MCF 10A (cell line): ENCODE measurements at regions of chr11 and their contacts with region 1.

Region 1: DNA sequence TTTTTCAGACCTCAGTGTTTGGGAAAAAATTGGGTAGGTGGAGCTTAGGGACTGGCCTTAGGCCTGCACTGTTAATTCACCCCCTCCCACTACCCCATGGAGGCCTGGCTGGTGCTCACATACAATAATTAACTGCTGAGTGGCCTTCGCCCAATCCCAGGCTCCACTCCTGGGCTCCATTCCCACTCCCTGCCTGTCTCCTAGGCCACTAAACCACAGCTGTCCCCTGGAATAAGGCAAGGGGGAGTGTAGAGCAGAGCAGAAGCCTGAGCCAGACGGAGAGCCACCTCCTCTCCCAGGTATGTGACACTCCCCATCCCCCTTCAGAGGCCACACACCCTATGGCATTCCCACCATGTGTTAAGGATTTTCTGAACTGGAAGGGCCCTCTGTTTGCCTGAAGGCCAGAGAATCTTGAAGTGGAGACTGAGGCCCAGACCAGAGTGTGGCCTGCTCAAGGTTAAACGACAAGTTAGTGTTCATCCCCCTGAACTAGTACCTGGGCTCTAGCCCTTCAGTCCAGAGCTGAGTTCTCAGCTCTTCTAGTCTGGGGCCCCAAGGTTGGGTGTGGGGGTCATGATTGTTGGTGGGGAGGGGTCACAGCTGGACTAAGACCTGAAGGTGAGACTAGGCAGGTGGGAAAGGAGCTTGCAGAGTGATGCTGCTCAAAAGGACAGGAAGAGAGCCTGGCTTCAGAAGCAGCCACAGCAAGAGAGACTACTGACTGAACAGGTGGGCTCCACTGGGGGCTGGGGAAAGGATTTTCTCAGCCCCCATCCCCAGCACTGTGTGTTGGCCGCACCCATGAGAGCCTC is 2.3 kb upstream of the FOLR1 start:
- DNase-seq: no peak
- H3K4me3 Mint-ChIP-seq: no peak overlapping the region
- H3K27ac Mint-ChIP-seq: no peak overlapping the region
- H3K4me1 Mint-ChIP-seq: peaks cover 7% of the 10 kb centered on the region
- H3K27me3 Mint-ChIP-seq: no peaks in the 10 kb centered on the region
- CTCF ChIP-seq: no peak

Region 2: DNA sequence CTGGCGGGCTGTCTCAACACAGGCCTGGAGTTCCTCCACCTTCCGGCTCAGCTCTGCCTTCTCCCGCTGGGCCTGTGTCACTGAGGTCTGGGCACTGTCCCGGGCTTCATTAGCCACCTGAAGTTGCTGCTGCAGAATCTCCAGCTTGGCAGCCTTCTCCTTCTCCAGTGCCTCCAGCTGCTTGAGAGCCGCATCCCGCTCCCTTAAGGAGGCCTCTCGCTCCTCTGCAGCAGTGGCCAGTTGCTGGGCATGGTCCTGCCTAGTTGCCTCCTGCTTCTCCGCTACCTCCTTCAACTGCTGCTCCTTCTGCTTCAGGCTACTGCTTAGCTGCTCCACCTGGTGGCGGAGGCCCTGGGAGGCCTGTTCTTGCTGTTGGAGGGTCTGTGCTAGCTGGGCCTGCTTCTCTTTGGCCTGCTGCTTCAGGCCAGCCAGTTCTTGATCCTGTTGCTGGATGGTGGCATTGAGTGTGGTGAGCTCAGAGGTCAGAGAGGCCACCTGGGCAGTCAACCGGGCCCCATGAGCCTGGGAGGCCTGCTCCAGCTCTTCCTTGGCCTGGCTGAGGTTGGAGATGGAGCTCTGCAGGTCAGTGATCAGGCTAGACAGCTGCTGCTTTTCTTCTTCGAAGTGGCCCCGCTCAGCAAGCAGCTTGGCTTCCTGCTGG is 174.0 kb before region 1 on chr11:
- CTCF ChIA-PET with region 1: interaction called, 24 read pairs
- POLR2A ChIA-PET with region 1: interaction called, 3 read pairs
- intact Hi-C with region 1: no loop called
- DNase-seq: no peak
- H3K4me3 Mint-ChIP-seq: no peak overlapping the region
- H3K27ac Mint-ChIP-seq: no peak overlapping the region
- H3K4me1 Mint-ChIP-seq: peaks cover 34% of the 10 kb centered on the region
- H3K27me3 Mint-ChIP-seq: no peaks in the 10 kb centered on the region
- CTCF ChIP-seq: peak; percentile 20

Region 3: DNA sequence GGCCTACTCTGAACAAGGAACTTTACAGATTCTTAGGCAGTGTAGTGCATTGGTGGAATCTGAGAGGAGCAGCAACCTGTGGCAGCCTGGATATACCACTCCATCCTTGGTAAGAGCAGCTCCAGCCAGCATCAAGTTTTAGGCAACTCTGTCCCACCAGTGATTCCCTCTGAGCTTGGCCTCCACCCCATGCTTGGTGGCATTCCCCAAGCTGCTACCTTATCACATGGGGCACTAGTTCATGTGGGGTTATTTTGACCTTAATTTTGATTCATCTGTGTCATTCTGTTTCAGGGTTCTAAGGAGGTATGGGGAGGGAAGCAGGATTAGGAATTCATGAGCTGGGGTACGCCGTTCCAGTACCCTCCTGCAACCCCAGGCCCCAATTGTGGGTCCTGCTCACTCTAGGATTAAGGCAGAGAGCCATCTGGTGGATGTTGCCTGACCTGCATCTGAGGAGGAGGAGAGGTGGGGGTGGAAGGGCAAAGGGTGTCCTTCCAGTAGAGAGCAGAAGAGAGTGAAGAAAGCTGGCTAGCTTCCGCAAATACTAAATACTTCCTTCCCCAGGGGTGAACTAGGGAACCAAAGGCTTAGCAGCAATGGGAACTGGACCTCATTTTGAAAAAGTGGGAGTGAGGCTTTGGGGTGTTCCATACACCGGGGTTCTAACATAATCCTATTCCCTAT is 98.5 kb before region 1 on chr11:
- CTCF ChIA-PET with region 1: interaction called, 58 read pairs
- POLR2A ChIA-PET with region 1: interaction called, 3 read pairs
- intact Hi-C with region 1: no loop called
- DNase-seq: peak; percentile 69
- H3K4me3 Mint-ChIP-seq: no peak overlapping the region
- H3K27ac Mint-ChIP-seq: peak overlapping the region; percentile 70
- H3K4me1 Mint-ChIP-seq: no peaks in the 10 kb centered on the region
- H3K27me3 Mint-ChIP-seq: no peaks in the 10 kb centered on the region
- CTCF ChIP-seq: peak; percentile 77

Region 4: DNA sequence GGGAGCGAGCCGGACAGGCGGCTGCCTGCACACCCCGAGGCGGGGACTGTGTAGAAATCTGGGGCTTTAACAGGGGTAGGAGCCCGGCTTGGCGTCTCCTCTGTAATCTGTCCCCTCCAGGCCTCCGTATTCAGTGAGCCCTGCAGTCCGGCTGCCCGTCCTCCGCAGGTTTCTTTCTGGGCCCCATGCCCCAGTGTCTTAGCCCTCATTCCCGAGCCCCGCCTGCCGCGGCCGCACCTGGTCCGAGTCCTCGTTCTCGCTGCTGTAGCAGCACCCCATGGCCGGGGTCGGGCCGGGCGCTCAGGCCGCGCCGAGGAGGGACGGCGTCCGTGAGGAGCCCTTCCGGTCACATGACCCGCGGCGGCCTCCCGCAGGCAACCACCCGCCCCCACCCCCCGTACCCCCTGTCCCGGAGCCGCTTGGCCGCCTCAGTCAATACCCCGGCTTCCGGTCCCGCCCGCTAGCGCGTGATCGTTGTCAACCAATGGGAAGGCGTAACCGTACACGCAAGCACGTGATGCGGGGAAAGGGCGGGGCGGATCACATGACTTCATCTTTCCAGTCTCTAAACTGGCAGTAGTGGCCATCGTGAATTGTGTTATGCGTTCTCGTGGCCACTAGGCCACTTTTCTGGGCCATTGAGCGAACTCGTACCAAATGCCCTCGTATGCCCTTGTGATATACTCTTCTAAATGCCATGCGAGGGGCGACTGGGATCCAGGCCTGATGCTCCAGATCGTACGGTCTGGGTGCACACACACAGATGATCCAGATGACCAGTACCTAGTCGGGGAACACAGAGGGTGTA is 86.5 kb before region 1 on chr11 and contains the start of gene LAMTOR1:
- CTCF ChIA-PET with region 1: interaction called, 47 read pairs
- POLR2A ChIA-PET with region 1: no interaction called
- intact Hi-C with region 1: no loop called
- DNase-seq: peak; percentile 98
- H3K4me3 Mint-ChIP-seq: peak within 1 kb of the TSS; percentile 100
- H3K27ac Mint-ChIP-seq: peak within 1 kb of the TSS; percentile 100
- H3K4me1 Mint-ChIP-seq: peaks cover 43% of the 10 kb centered on the region
- H3K27me3 Mint-ChIP-seq: no peaks in the 10 kb centered on the region
- CTCF ChIP-seq: peak; percentile 29
- total RNA-seq, gene LAMTOR1: 76.9 and 82.4 TPM in 2 replicates

Region 5: GRCh38 chr11:72112321-72113219 is 77.1 kb before region 1 on chr11 and contains the start of gene ANAPC15:
- CTCF ChIA-PET with region 1: interaction called, 25 read pairs
- POLR2A ChIA-PET with region 1: interaction called, 3 read pairs
- intact Hi-C with region 1: no loop called
- DNase-seq: peak; percentile 100
- H3K4me3 Mint-ChIP-seq: peak within 1 kb of the TSS; percentile 98
- H3K27ac Mint-ChIP-seq: peak within 1 kb of the TSS; percentile 100
- H3K4me1 Mint-ChIP-seq: peaks cover 20% of the 10 kb centered on the region
- H3K27me3 Mint-ChIP-seq: no peaks in the 10 kb centered on the region
- CTCF ChIP-seq: no peak
- total RNA-seq, gene ANAPC15: 52.2 and 63.6 TPM in 2 replicates

Region 6: GRCh38 chr11:72174299-72175070 is 15.2 kb before region 1 on chr11:
- CTCF ChIA-PET with region 1: interaction called, 22 read pairs
- POLR2A ChIA-PET with region 1: no interaction called
- intact Hi-C with region 1: no loop called
- DNase-seq: peak; percentile 73
- H3K4me3 Mint-ChIP-seq: no peak overlapping the region
- H3K27ac Mint-ChIP-seq: no peak overlapping the region
- H3K4me1 Mint-ChIP-seq: peaks cover 11% of the 10 kb centered on the region
- H3K27me3 Mint-ChIP-seq: no peaks in the 10 kb centered on the region
- CTCF ChIP-seq: no peak

Region 7: DNA sequence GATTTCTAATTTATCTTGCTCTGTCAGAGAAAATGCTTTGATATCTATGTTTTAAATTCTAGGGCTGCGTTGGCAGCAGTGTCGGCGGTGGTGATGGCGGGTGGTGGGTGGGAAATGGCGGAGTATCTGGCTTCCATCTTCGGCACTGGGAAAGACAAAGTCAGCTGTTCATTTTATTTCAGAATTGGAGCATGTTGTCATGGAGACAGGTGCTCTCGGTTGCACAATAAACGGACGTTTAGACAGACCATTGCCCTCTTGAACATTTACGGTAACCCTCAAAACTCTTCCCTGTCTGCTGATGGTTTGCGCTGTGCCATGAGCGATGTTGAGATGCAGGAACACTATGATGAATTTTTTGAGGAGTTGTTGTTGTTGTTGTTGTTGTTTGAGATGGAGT is 90.4 kb after region 1 on chr11:
- CTCF ChIA-PET with region 1: no interaction called
- POLR2A ChIA-PET with region 1: no interaction called
- intact Hi-C with region 1: no loop called
- DNase-seq: no peak
- H3K4me3 Mint-ChIP-seq: no peak overlapping the region
- H3K27ac Mint-ChIP-seq: no peak overlapping the region
- H3K4me1 Mint-ChIP-seq: peaks cover 9% of the 10 kb centered on the region
- H3K27me3 Mint-ChIP-seq: peaks cover 22% of the 10 kb centered on the region
- CTCF ChIP-seq: no peak